ENCODE measurements at regions of chr3 and their contacts with region 1.

Region 1: GRCh38 chr3:192423003-192423349 is 304.4 kb downstream of the FGF12 start:
- DNase-seq: no peak
- ATAC-seq: no peak

Region 2: DNA sequence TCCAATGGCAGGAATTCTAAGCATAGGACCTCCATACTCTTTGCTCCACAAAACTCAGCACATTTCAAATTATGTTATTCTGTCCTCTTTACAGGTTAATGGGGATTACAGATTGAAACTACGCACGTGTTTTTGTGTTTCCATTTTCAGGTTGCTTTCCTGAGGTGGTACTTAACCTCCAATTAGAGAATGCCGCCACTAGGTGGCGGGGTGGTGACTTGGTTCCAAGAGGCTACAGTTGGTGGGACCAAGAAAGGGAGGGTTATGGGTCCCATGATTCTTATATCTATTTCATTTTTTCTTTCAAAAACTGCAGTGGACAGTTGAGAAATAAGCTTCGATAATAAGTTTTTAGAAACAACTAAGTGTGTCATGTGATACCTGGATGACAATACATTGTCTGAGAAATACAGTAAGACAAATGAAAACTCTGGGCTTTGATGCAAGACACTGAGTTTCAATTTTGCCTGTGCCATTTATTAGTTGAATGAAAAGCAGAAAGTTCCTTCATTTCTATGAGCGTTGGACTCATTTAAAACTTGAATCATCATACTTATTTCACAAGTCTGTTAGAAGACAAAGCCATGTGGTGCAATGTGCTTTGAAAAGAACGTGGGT is 234.6 kb before region 1 on chr3:
- intact Hi-C with region 1: loop called (anchors 10 kb)
- DNase-seq: peak; percentile 63
- ATAC-seq: peak; percentile 60